Gastrocnemius medialis (tissue), 4 donors: ENCODE measurements at regions of chrX and their contacts with region 1.

Region 1: GRCh38 chrX:78327370-78328086 is at the start of gene CYSLTR1:
- DNase-seq: no peak
- ATAC-seq: no peak
- H3K4me3 ChIP-seq: peak within 1 kb of the TSS in 2 of 4 donors; percentile 21
- H3K27ac ChIP-seq: no peak within 1 kb of the TSS
- H3K4me1 ChIP-seq: no peaks in the 10 kb centered on the region
- H3K27me3 ChIP-seq: no peaks in the 10 kb centered on the region
- CTCF ChIP-seq: no peak
- POLR2A ChIP-seq: no peak
- total RNA-seq, gene CYSLTR1: 0.24 to 1.1 (median 0.76) TPM in 3 of 4 donors, not detected in the other

Region 2: GRCh38 chrX:78075787-78076389 is 251.6 kb before region 1 on chrX:
- in situ Hi-C with region 1: no loop called
- intact Hi-C with region 1: no loop called
- DNase-seq: no peak
- ATAC-seq: no peak
- H3K4me3 ChIP-seq: no peak overlapping the region
- H3K27ac ChIP-seq: no peak overlapping the region
- H3K4me1 ChIP-seq: no peaks in the 10 kb centered on the region
- H3K27me3 ChIP-seq: no peaks in the 10 kb centered on the region
- CTCF ChIP-seq: no peak
- POLR2A ChIP-seq: no peak

Region 3: DNA sequence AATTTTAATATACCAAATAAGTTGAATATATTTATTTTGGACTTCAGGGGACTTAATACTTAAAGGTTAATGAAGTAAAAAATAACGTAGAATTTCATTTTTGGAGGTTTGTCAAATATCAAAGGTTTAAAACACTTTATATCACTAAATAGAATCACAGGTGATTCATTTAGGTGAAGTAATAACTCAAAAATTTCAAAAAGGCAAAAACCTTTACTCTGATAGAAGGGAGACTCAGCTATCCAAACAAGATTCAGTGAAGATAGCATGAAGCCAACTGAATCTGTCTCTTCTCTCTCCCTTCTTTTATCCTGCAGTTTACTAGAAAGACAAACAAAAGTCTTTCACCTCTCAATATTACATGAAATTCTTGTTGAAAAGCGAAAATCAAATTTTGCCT is 110.1 kb after region 1 on chrX:
- in situ Hi-C with region 1: loop called in 1 of 4 experiments (anchors 25 kb)
- intact Hi-C with region 1: no loop called
- DNase-seq: no peak
- ATAC-seq: no peak
- H3K4me3 ChIP-seq: no peak overlapping the region
- H3K27ac ChIP-seq: no peak overlapping the region
- H3K4me1 ChIP-seq: no peaks in the 10 kb centered on the region
- H3K27me3 ChIP-seq: no peaks in the 10 kb centered on the region
- CTCF ChIP-seq: no peak
- POLR2A ChIP-seq: no peak